Heart left ventricle (tissue), 16 donors: ENCODE measurements at regions of chr2 and their contacts with region 1.

Region 1: GRCh38 chr2:69306822-69307578 is 80.0 kb downstream of the GFPT1 start:
- DNase-seq: peak; percentile 83 to 93 (median 84)
- ATAC-seq: peak; percentile 82 to 92 (median 90)
- H3K4me3 ChIP-seq: peak overlapping the region; percentile 31 to 76 (median 62)
- H3K27ac ChIP-seq: peak overlapping the region; percentile 44 to 88 (median 78)
- H3K4me1 ChIP-seq: peaks cover 0 to 58% (median 30%) of the 10 kb centered on the region in 12 donors
- H3K27me3 ChIP-seq: peaks cover 0 to 23% (median 0%) of the 10 kb centered on the region in 9 donors
- CTCF ChIP-seq: peak; percentile 74 to 95 (median 86)
- POLR2A ChIP-seq: no peak

Region 2: GRCh38 chr2:68943581-68944568 is 363.1 kb before region 1 on chr2:
- intact Hi-C with region 1: loop called in 9 of 10 experiments (anchors 1 to 10 kb)
- DNase-seq: peak in 3 of 5 donors; percentile 40 to 52 (median 44)
- ATAC-seq: peak; percentile 58 to 71 (median 70)
- H3K4me3 ChIP-seq: no peak overlapping the region
- H3K27ac ChIP-seq: no peak overlapping the region
- H3K4me1 ChIP-seq: peaks cover 0 to 10% (median 0%) of the 10 kb centered on the region in 12 donors
- H3K27me3 ChIP-seq: peaks cover 0 to 3% (median 0%) of the 10 kb centered on the region in 9 donors
- CTCF ChIP-seq: peak; percentile 74 to 88 (median 80)
- POLR2A ChIP-seq: no peak

Region 3: GRCh38 chr2:69026026-69026425 is 281.0 kb before region 1 on chr2:
- intact Hi-C with region 1: loop called in 9 of 10 experiments (anchors 1 to 5 kb)
- DNase-seq: peak in 2 of 5 donors; percentile 27 to 34
- ATAC-seq: peak in 3 of 4 donors; percentile 81 to 89 (median 87)
- H3K4me3 ChIP-seq: no peak overlapping the region
- H3K27ac ChIP-seq: no peak overlapping the region
- H3K4me1 ChIP-seq: peaks cover 0 to 8% (median 1%) of the 10 kb centered on the region in 12 donors
- H3K27me3 ChIP-seq: no peaks in the 10 kb centered on the region
- CTCF ChIP-seq: peak; percentile 43 to 70 (median 58)
- POLR2A ChIP-seq: no peak

Region 4: GRCh38 chr2:69177785-69178636 is 129.0 kb before region 1 on chr2:
- intact Hi-C with region 1: loop called in 4 of 10 experiments (anchors 5 to 10 kb)
- DNase-seq: peak; percentile 80 to 93 (median 90)
- ATAC-seq: peak; percentile 67 to 94 (median 89)
- H3K4me3 ChIP-seq: peak overlapping the region in 4 of 12 donors; percentile 1 to 33 (median 20)
- H3K27ac ChIP-seq: peak overlapping the region; percentile 46 to 97 (median 75)
- H3K4me1 ChIP-seq: peaks cover 0 to 36% (median 8%) of the 10 kb centered on the region in 12 donors
- H3K27me3 ChIP-seq: no peaks in the 10 kb centered on the region
- CTCF ChIP-seq: no peak
- POLR2A ChIP-seq: no peak

Region 5: GRCh38 chr2:69222953-69223658 is 83.9 kb before region 1 on chr2:
- intact Hi-C with region 1: loop called in 2 of 10 experiments (anchors 5 to 10 kb)
- DNase-seq: peak; percentile 48 to 79 (median 65)
- ATAC-seq: peak; percentile 5 to 80 (median 58)
- H3K4me3 ChIP-seq: no peak overlapping the region
- H3K27ac ChIP-seq: peak overlapping the region in 4 of 12 donors; percentile 14 to 44 (median 28)
- H3K4me1 ChIP-seq: peaks cover 0 to 43% (median 18%) of the 10 kb centered on the region in 12 donors
- H3K27me3 ChIP-seq: no peaks in the 10 kb centered on the region
- CTCF ChIP-seq: no peak
- POLR2A ChIP-seq: no peak